Heart right ventricle (tissue), 16 donors: ENCODE measurements at regions of chr22 and their contacts with region 1.

Region 1: GRCh38 chr22:42214633-42215415 is 55.6 kb downstream of the TCF20 start:
- DNase-seq: peak; percentile 44 to 59
- ATAC-seq: peak; percentile 54 to 95 (median 90)
- H3K4me3 ChIP-seq: no peak overlapping the region
- H3K27ac ChIP-seq: peak overlapping the region in 4 of 10 donors; percentile 5 to 52 (median 34)
- H3K4me1 ChIP-seq: peaks cover 2 to 38% (median 5%) of the 10 kb centered on the region in 9 donors
- H3K27me3 ChIP-seq: no peaks in the 10 kb centered on the region
- CTCF ChIP-seq: no peak

Region 2: DNA sequence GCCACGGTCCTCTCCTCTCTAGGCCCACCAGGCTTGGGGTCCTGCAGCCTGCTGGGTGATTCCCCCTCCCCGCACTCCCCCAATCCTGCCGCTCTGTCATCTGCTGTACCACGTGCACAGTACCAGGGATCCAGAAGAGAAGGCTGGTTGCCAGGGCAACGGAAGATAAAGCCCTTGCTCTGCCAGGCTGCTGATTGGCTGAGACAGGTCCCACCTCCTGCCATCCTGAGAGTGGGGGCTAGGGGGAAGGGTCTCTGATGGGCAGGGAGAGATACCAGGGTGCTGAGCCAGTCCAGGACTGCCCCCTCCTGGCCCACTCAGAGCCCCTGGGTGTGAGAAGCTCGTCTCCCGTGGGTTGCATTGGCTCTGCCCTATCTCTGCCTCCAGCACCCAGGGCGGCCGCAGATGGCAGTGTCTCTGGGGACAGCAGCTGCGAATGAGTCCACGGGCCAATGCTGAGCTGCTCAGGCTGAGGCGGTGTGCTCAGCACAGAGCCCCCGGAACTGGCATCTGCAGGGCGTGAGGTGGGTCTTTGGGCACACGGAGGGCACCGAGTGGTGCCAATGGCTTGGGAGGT is 262.8 kb before region 1 on chr22 and contains the start of gene SMIM45:
- intact Hi-C with region 1: loop called in 1 of 10 experiments (anchors 5 kb)
- DNase-seq: no peak
- ATAC-seq: peak in 2 of 8 donors; percentile 16 to 42
- H3K4me3 ChIP-seq: no peak within 1 kb of the TSS
- H3K27ac ChIP-seq: no peak within 1 kb of the TSS
- H3K4me1 ChIP-seq: peaks cover 0 to 8% (median 0%) of the 10 kb centered on the region in 9 donors
- H3K27me3 ChIP-seq: peaks cover 0 to 15% (median 6%) of the 10 kb centered on the region in 7 donors
- CTCF ChIP-seq: no peak

Region 3: DNA sequence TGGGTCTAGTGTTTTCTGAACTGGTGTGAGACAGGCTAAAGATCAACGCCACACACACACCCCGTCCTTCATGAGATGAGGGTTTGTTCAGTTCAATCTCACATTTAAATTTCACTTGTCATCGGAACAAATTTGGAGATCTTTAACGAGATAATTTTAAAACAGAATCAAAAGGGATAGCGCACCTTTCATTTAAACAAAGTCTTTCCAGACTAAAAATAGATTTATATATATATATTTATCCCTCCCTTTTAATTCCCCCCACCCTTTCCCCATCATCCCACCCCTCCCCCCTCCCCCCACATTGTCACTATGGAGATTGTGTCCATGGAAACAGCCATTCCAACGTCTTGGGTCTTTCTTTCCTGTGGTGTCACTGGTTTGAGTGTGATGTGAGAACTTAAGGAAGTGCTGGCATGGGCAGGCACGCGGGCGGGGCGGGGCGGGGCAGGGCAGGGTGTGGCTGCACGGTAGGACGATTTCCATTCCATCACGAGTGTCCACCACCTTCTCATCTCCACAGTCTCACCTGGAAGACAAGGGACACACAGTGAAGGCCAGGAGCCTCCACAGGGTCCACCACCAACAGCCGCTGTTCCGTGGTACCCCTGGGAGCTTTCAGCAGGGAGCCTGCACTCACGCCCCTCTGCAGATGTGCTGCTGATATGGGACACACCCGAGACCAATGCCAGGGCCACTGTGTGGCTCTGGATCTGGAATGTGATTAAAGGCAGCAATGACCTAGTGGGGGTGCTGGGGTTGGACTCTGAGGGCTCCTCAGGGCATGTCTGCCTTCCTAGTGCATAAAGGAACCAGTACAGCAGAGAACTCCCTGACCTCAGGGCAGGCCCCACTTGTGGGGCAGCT is 53.8 kb before region 1 on chr22:
- intact Hi-C with region 1: no loop called
- DNase-seq: no peak
- ATAC-seq: no peak
- H3K4me3 ChIP-seq: no peak overlapping the region
- H3K27ac ChIP-seq: no peak overlapping the region
- H3K4me1 ChIP-seq: peaks cover 0 to 7% (median 0%) of the 10 kb centered on the region in 9 donors
- H3K27me3 ChIP-seq: no peaks in the 10 kb centered on the region
- CTCF ChIP-seq: no peak

Region 4: DNA sequence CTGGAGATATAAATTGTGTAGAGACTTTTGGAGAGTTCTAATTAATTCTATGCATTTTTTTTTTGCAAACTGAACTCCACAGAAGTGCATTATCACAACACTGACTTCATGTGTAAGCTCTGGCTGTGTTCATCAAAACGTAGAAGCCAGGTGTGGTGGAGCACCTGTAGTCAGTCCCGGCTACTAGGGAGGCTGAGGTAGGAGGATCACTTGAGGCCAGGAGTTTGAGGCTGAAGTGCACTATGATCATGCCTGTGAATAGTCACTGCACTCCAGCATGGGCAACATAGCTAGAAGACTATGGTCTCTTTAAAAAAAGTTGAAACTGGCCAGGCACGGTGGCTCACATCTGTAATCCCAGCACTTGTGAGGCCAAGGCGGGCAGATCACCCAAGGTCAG is 35.0 kb after region 1 on chr22:
- intact Hi-C with region 1: loop called in 1 of 10 experiments (anchors 5 kb)
- DNase-seq: no peak
- ATAC-seq: no peak
- H3K4me3 ChIP-seq: no peak overlapping the region
- H3K27ac ChIP-seq: no peak overlapping the region
- H3K4me1 ChIP-seq: peaks cover 0 to 13% (median 0%) of the 10 kb centered on the region in 9 donors
- H3K27me3 ChIP-seq: no peaks in the 10 kb centered on the region
- CTCF ChIP-seq: no peak